ENCODE measurements at regions of chr1 and their contacts with region 1.

Region 1: DNA sequence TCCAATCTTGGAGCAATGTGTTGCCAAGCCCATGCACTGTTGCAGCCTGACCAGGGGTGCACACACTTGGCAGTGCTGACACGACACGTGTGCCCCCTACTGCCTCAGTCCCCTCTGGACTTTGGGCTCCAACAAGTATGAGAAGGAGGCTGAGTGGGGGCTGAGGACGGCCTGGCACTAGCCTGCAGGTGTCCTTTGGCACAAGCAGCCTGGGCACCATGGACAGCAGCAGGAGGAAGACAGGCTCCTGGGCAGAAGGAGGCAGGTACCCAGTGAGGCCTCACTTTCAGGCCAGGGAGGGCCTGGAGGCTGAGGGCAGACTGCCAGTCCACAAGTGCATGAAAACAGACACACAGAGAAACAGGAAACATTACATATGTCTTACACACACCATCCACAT is 1702.9 kb upstream of the B3GALT2 start:
- DNase-seq: no peak
- H3K4me3 ChIP-seq: no peak overlapping the region
- H3K27ac ChIP-seq: no peak overlapping the region
- H3K4me1 ChIP-seq: no peaks in the 10 kb centered on the region
- H3K27me3 ChIP-seq: no peaks in the 10 kb centered on the region
- CTCF ChIP-seq: no peak
- POLR2A ChIP-seq: no peak

Region 2: GRCh38 chr1:194935864-194936263 is 46.6 kb after region 1 on chr1:
- intact Hi-C with region 1: no loop called
- DNase-seq: no peak
- H3K4me3 ChIP-seq: no peak overlapping the region
- H3K27ac ChIP-seq: no peak overlapping the region
- H3K4me1 ChIP-seq: no peaks in the 10 kb centered on the region
- H3K27me3 ChIP-seq: no peaks in the 10 kb centered on the region
- CTCF ChIP-seq: no peak
- POLR2A ChIP-seq: no peak

Region 3: DNA sequence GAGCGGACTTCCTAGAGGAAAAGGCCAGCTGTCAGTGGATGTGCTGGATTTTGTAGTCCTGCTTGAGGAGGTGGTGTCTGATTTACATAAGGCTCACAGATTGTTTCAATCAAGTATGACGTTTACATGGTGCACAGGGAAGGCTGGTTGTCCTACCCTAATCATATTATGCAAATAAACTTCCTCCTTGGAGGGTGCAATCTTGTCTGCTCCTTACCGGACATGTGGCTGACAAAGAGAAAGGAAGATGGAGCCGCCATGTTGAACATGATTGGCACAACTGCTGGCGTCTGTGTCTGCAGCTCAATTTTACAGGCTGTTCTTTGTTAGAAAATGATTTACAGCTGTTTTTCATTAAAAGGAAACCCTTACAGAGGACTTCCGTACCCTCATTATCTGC is 62.9 kb after region 1 on chr1:
- intact Hi-C with region 1: loop called (anchors 2 kb)
- DNase-seq: no peak
- H3K4me3 ChIP-seq: no peak overlapping the region
- H3K27ac ChIP-seq: no peak overlapping the region
- H3K4me1 ChIP-seq: no peaks in the 10 kb centered on the region
- H3K27me3 ChIP-seq: no peaks in the 10 kb centered on the region
- CTCF ChIP-seq: no peak
- POLR2A ChIP-seq: no peak

Measured in spleen (tissue), 13 donors.